ENCODE measurements at regions of chr13 and their contacts with region 1.

Region 1: GRCh38 chr13:98142380-98143156 is at the start of gene FARP1:
- DNase-seq: peak; percentile 84
- H3K4me3 ChIP-seq: peak within 1 kb of the TSS; percentile 78 to 96 (median 90)
- H3K27ac ChIP-seq: peak within 1 kb of the TSS; percentile 81 to 90 (median 84)
- H3K4me1 ChIP-seq: peaks cover 16 to 23% (median 19%) of the 10 kb centered on the region in 4 donors
- H3K27me3 ChIP-seq: peaks cover 5% of the 10 kb centered on the region
- CTCF ChIP-seq: peak in 2 of 5 experiments; percentile 30 to 38
- EP300 ChIP-seq: no peak
- POLR2A ChIP-seq: peak; percentile 32
- total RNA-seq, gene FARP1: 32.8 to 41.8 (median 38.3) TPM

Region 2: GRCh38 chr13:98397221-98397620 is 254.7 kb after region 1 on chr13:
- in situ Hi-C with region 1: loop called in 3 of 4 experiments (anchors 25 kb)
- intact Hi-C with region 1: no loop called
- DNase-seq: no peak
- H3K4me3 ChIP-seq: no peak overlapping the region
- H3K27ac ChIP-seq: peak overlapping the region in 1 of 4 donors; percentile 11
- H3K4me1 ChIP-seq: no peaks in the 10 kb centered on the region
- H3K27me3 ChIP-seq: no peaks in the 10 kb centered on the region
- CTCF ChIP-seq: peak in 3 of 5 experiments; percentile 16 to 27 (median 16)
- EP300 ChIP-seq: no peak
- POLR2A ChIP-seq: no peak

Region 3: GRCh38 chr13:98405107-98405571 is 262.6 kb after region 1 on chr13:
- in situ Hi-C with region 1: loop called in 2 of 4 experiments (anchors 25 kb)
- intact Hi-C with region 1: no loop called
- DNase-seq: no peak
- H3K4me3 ChIP-seq: no peak overlapping the region
- H3K27ac ChIP-seq: no peak overlapping the region
- H3K4me1 ChIP-seq: peaks cover 0 to 17% (median 10%) of the 10 kb centered on the region in 4 donors
- H3K27me3 ChIP-seq: no peaks in the 10 kb centered on the region
- CTCF ChIP-seq: no peak
- EP300 ChIP-seq: no peak
- POLR2A ChIP-seq: no peak

Region 4: GRCh38 chr13:98653463-98653985 is 511.0 kb after region 1 on chr13:
- in situ Hi-C with region 1: loop called in 1 of 4 experiments (anchors 10 kb)
- intact Hi-C with region 1: no loop called
- DNase-seq: peak; percentile 88
- H3K4me3 ChIP-seq: no peak overlapping the region
- H3K27ac ChIP-seq: peak overlapping the region in 1 of 4 donors; percentile 23
- H3K4me1 ChIP-seq: peaks cover 11 to 39% (median 27%) of the 10 kb centered on the region in 4 donors
- H3K27me3 ChIP-seq: no peaks in the 10 kb centered on the region
- CTCF ChIP-seq: peak; percentile 87 to 95 (median 94)
- EP300 ChIP-seq: no peak
- POLR2A ChIP-seq: no peak